ENCODE measurements at regions of chr15 and their contacts with region 1.

Region 1: GRCh38 chr15:53775483-53775882 is 16.0 kb upstream of the WDR72 start:
- H3K4me3 Mint-ChIP-seq: no peak overlapping the region
- H3K27ac Mint-ChIP-seq: no peak overlapping the region
- H3K4me1 Mint-ChIP-seq: no peaks in the 10 kb centered on the region
- H3K27me3 Mint-ChIP-seq: no peaks in the 10 kb centered on the region

Region 2: DNA sequence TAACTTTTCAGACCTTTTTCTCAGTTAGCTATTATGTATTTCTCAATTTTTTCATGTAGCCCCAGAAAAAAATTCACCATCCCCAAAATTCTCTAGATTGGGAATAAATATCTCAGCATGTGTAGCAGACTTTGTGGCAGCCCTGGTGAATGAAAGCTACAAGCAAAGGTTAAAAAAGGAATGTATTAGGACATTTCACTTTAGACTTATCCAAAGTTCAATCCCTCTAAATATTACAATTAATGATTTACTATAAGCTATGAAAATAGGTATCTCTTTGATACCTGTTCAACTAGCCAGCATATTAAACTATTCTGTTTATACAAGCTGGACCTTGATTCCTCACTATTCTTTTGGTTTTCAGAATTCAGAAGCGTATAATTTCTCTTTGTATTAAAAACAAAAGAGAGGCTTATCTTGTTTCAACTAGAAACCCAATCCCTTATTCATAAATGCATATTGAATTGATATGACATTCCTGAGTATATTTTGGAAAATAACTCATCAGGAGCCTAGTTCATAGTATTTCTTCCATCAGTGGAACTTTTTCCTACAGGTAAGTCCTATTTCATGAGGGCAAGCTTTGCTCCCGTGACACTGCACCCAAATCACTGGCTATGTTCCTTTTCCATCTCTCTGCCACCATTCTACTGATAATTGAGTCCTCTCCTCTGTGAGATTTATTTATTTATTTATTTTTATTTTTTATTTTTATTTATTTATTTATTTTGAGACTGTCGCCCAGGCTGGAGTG is 54.0 kb before region 1 on chr15:
- intact Hi-C with region 1: no loop called
- H3K4me3 Mint-ChIP-seq: no peak overlapping the region
- H3K27ac Mint-ChIP-seq: no peak overlapping the region
- H3K4me1 Mint-ChIP-seq: no peaks in the 10 kb centered on the region
- H3K27me3 Mint-ChIP-seq: no peaks in the 10 kb centered on the region

Region 3: GRCh38 chr15:53833134-53833624 is 57.7 kb after region 1 on chr15:
- intact Hi-C with region 1: loop called (anchors 10 kb)
- H3K4me3 Mint-ChIP-seq: no peak overlapping the region
- H3K27ac Mint-ChIP-seq: no peak overlapping the region
- H3K4me1 Mint-ChIP-seq: no peaks in the 10 kb centered on the region
- H3K27me3 Mint-ChIP-seq: no peaks in the 10 kb centered on the region

Measured in dendritic cell treated with granulocyte-macrophage colony-stimulating factor and Interleukin-4, amounts not matched to agents 40 ng/mL and 50 ng/mL, for 4 days (primary cell).